HCT116 (cell line): ENCODE measurements at regions of chr5 and their contacts with region 1.

Region 1: DNA sequence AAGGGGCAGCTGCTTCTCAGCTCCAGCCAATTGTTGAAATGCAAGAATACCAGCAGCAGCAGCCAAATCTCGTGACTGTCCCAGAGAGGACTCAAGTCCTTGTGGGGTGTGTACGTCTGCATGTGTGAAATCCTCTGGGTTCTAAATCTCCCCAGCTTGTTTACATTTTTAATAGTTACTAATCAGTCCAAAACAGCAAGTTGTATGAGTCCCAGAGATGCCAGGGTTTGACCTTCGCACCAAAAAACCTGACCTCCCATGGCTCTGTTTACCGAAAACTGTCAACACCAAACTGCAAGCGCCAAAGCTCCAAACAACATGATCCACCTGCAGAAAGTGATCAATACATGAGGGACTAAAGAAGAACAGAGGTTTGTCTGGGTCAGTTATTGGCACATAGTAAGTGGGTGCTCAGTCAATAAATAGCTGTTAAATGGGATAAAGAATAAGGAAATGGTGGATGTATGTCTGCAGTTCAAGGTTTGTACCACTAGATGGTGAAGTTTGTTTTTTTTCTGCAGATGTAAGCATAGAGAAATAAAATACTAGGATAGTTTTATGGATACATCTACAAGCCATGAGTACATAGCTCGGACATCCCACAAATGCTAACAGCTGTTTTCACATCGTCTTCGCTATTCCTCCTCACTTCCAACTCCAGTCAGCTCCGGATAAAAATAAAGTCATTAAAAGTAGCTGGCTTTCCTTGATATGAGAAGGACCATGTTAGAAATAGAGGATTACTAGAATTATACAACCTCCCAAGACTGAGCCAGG is 85.3 kb upstream of the ADRB2 start:
- DNase-seq: peak; percentile 54
- ATAC-seq: peak; percentile 78
- H3K4me3 ChIP-seq: no peak overlapping the region
- H3K27ac ChIP-seq: no peak overlapping the region
- H3K4me1 ChIP-seq: no peaks in the 10 kb centered on the region
- H3K27me3 ChIP-seq: no peaks in the 10 kb centered on the region
- CTCF ChIP-seq: peak; percentile 63 to 83 (median 76)
- POLR2A ChIP-seq: no peak
- RAD21 ChIP-seq: peak; percentile 89

Region 2: DNA sequence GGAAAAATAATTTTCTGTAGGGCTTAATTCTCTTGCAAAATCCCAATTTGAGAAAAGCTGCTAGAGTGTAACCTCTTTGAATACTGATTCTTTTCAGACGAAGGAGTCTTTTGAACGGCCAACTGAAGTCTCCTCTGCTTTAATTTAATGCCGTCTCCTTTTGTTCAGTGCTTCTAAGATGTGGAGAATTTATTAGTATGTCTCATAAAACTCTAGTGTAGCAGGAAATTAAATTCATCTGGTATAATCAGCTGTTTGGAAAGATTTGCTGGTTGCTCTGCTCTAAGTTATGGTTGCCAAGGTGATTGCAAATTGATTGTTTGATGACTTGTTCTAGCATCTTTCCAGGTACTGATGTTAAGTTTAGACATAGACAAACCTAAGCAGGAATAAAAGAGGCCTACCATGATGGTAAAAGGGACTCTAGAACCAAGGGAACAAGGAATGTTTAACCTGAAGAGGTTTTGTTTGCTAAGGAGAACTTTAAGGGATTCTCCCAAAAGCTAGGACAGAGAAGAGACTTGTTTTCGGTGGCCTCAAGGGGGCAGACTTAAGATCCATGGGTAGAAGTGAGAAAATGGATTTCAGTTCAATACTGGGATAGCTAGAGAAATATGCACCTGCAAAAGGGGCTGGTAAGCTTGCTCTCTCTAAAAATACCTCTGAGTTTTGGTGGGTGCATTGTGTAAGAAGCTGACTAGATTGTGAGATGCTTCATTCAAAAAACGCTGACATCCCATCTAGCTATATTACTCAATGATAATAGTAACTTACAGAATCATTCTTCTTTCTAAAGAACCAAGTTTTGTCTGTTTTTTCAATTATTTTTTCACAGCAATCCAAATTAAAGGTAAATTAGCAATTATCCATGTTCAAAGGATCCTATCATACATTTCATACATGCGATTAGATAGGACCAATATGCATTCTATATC is 79.6 kb after region 1 on chr5:
- CTCF ChIA-PET with region 1: interaction called, 11 read pairs
- POLR2A ChIA-PET with region 1: no interaction called
- RAD21 ChIA-PET with region 1: interaction called in 1 of 2 experiments, 3 read pairs
- intact Hi-C with region 1: loop called (anchors 5 kb)
- DNase-seq: peak; percentile 31
- ATAC-seq: peak; percentile 83
- H3K4me3 ChIP-seq: no peak overlapping the region
- H3K27ac ChIP-seq: no peak overlapping the region
- H3K4me1 ChIP-seq: peaks cover 5 to 6% of the 10 kb centered on the region in 2 experiments; a peak in 2 of 4 replicates
- H3K27me3 ChIP-seq: no peaks in the 10 kb centered on the region
- CTCF ChIP-seq: peak; percentile 60 to 78 (median 78); a peak in 5 of 6 replicates
- POLR2A ChIP-seq: no peak
- RAD21 ChIP-seq: peak; percentile 49

Region 3: GRCh38 chr5:148912714-148913398 is 171.7 kb after region 1 on chr5:
- CTCF ChIA-PET with region 1: interaction called, 12 read pairs
- POLR2A ChIA-PET with region 1: no interaction called
- RAD21 ChIA-PET with region 1: no interaction called
- intact Hi-C with region 1: no loop called
- DNase-seq: peak; percentile 54
- ATAC-seq: peak; percentile 75
- H3K4me3 ChIP-seq: peak overlapping the region in 1 of 2 experiments; percentile 36; a peak in 1 of 4 replicates
- H3K27ac ChIP-seq: peak overlapping the region; percentile 19; the same call in 1 of the 2 replicates
- H3K4me1 ChIP-seq: peaks cover 21 to 65% of the 10 kb centered on the region in 2 experiments
- H3K27me3 ChIP-seq: no peaks in the 10 kb centered on the region
- CTCF ChIP-seq: peak; percentile 52 to 67 (median 58); a peak in 5 of 6 replicates
- POLR2A ChIP-seq: no peak
- RAD21 ChIP-seq: peak; percentile 82

Region 4: DNA sequence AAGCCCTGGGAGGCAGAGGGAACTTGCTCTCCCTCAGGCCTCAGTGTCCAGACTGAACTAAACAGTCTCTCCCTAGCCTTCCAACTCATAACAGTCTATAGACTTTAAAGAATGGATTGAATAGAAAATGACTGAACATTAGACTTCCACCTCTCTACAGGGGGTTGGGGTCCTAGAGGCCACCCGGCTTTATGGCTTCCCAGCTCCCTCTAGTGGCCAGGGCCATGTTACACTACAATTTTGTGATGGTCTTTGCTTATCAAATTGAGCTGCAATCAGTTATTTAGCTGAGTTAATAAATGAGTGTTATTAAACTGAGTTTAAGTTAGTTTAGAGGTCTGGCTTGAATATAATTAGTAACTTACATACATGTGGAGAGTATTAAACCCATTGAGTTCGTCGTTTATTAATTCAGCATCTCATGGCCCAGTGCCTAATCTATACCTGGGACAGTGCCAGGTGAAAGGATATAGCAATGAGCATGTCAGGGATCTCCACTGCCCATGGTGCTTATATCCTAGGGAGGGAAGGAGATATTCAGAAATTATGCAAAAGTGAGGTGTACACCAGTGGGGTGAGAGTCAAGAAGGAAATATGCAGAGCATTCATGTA is 216.5 kb after region 1 on chr5:
- CTCF ChIA-PET with region 1: interaction called, 59 read pairs
- POLR2A ChIA-PET with region 1: no interaction called
- RAD21 ChIA-PET with region 1: interaction called, 4 to 7 read pairs
- intact Hi-C with region 1: loop called (anchors 1 kb)
- DNase-seq: no peak
- ATAC-seq: peak; percentile 76
- H3K4me3 ChIP-seq: no peak overlapping the region
- H3K27ac ChIP-seq: no peak overlapping the region
- H3K4me1 ChIP-seq: peaks cover 0 to 7% of the 10 kb centered on the region in 2 experiments; a peak in 1 of 4 replicates
- H3K27me3 ChIP-seq: no peaks in the 10 kb centered on the region
- CTCF ChIP-seq: peak; percentile 84 to 97 (median 90)
- POLR2A ChIP-seq: no peak
- RAD21 ChIP-seq: peak; percentile 83

Region 5: GRCh38 chr5:148998174-148998797 is 257.1 kb after region 1 on chr5:
- CTCF ChIA-PET with region 1: interaction called, 13 read pairs
- POLR2A ChIA-PET with region 1: no interaction called
- RAD21 ChIA-PET with region 1: interaction called in 1 of 2 experiments, 3 read pairs
- intact Hi-C with region 1: loop called (anchors 1 kb)
- DNase-seq: peak; percentile 63
- ATAC-seq: peak; percentile 82
- H3K4me3 ChIP-seq: no peak overlapping the region
- H3K27ac ChIP-seq: no peak overlapping the region
- H3K4me1 ChIP-seq: peaks cover 8 to 20% of the 10 kb centered on the region in 2 experiments
- H3K27me3 ChIP-seq: no peaks in the 10 kb centered on the region
- CTCF ChIP-seq: peak; percentile 63 to 81 (median 80)
- POLR2A ChIP-seq: no peak
- RAD21 ChIP-seq: peak; percentile 91

Region 6: DNA sequence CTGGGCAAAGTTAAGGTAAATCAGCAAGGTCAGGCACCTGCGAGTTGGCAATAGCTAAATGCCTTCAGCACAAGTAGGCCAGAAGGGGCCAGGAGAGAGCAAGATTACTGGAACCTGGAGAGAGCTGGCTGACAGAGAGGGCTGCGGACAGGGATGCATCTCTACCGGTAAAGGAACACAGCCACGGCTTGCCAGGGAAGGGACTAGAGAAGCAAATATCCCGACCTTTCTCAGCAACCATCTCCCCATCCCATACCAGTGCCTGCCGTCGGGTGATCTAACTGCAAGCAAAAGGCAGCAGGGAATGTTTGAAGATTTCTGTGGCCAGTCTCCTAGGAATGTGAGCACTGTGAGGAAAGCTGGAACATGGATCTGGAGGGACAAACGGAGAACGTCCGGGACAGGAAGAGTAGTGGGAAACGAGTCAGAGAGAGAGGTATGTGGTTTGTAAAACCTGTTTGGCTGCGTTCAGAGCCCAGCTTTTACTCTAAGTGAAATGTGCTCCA is 384.3 kb after region 1 on chr5:
- CTCF ChIA-PET with region 1: interaction called, 10 read pairs
- POLR2A ChIA-PET with region 1: interaction called, 3 read pairs
- RAD21 ChIA-PET with region 1: no interaction called
- intact Hi-C with region 1: no loop called
- DNase-seq: no peak
- ATAC-seq: peak; percentile 74
- H3K4me3 ChIP-seq: peak overlapping the region in 1 of 2 experiments; percentile 23; a peak in 1 of 4 replicates
- H3K27ac ChIP-seq: no peak overlapping the region
- H3K4me1 ChIP-seq: peaks cover 0 to 26% of the 10 kb centered on the region in 2 experiments; a peak in 2 of 4 replicates
- H3K27me3 ChIP-seq: no peaks in the 10 kb centered on the region
- CTCF ChIP-seq: peak; percentile 34 to 46 (median 43); a peak in 4 of 6 replicates
- POLR2A ChIP-seq: no peak
- RAD21 ChIP-seq: peak; percentile 50

Region 7: GRCh38 chr5:149268928-149269557 is 527.9 kb after region 1 on chr5:
- CTCF ChIA-PET with region 1: interaction called, 12 read pairs
- POLR2A ChIA-PET with region 1: no interaction called
- RAD21 ChIA-PET with region 1: no interaction called
- intact Hi-C with region 1: no loop called
- DNase-seq: peak; percentile 55
- ATAC-seq: peak; percentile 26
- H3K4me3 ChIP-seq: no peak overlapping the region
- H3K27ac ChIP-seq: no peak overlapping the region
- H3K4me1 ChIP-seq: peaks cover 0 to 8% of the 10 kb centered on the region in 2 experiments; a peak in 2 of 4 replicates
- H3K27me3 ChIP-seq: no peaks in the 10 kb centered on the region
- CTCF ChIP-seq: peak; percentile 55 to 82 (median 69)
- POLR2A ChIP-seq: no peak
- RAD21 ChIP-seq: peak; percentile 82

Region 8: DNA sequence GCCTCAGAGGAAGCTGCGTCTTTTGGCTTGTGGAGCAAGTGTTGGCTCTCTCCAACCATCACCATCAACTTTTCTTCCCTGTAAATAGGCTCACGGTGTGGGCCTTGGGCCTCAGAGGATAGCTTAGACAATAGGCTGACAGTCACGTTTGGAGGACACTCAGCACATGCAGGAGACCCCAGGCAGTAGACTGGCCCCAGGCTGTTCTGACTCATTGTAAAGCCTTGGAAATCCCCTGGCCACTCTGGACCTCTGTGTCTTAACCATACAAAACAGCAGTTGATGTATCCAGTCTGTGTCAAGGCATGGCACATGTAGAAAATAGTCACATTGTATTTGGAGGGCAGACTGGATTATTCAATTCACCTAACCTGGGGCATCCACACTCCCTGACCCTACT is 1653.0 kb after region 1 on chr5:
- CTCF ChIA-PET with region 1: no interaction called
- POLR2A ChIA-PET with region 1: no interaction called
- RAD21 ChIA-PET with region 1: no interaction called
- intact Hi-C with region 1: no loop called
- DNase-seq: no peak
- ATAC-seq: no peak
- H3K4me3 ChIP-seq: no peak overlapping the region
- H3K27ac ChIP-seq: no peak overlapping the region
- H3K4me1 ChIP-seq: no peaks in the 10 kb centered on the region
- H3K27me3 ChIP-seq: no peaks in the 10 kb centered on the region
- CTCF ChIP-seq: no peak
- POLR2A ChIP-seq: no peak
- RAD21 ChIP-seq: no peak